CD4-positive, alpha-beta T cell (primary cell): ENCODE measurements at regions of chr10 and their contacts with region 1.

Region 1: GRCh38 chr10:29446327-29446726 is 157.5 kb downstream of the LYZL1 start:
- DNase-seq: no peak
- ATAC-seq: no peak
- H3K4me3 ChIP-seq: no peak overlapping the region
- H3K4me3 Mint-ChIP-seq: no peak overlapping the region
- H3K27ac ChIP-seq: no peak overlapping the region
- H3K27ac Mint-ChIP-seq: no peak overlapping the region
- H3K4me1 ChIP-seq: peaks cover 6% of the 10 kb centered on the region
- H3K4me1 Mint-ChIP-seq: peaks cover 9% of the 10 kb centered on the region
- H3K27me3 ChIP-seq: no peaks in the 10 kb centered on the region
- H3K27me3 Mint-ChIP-seq: no peaks in the 10 kb centered on the region
- CTCF ChIP-seq: no peak

Region 2: DNA sequence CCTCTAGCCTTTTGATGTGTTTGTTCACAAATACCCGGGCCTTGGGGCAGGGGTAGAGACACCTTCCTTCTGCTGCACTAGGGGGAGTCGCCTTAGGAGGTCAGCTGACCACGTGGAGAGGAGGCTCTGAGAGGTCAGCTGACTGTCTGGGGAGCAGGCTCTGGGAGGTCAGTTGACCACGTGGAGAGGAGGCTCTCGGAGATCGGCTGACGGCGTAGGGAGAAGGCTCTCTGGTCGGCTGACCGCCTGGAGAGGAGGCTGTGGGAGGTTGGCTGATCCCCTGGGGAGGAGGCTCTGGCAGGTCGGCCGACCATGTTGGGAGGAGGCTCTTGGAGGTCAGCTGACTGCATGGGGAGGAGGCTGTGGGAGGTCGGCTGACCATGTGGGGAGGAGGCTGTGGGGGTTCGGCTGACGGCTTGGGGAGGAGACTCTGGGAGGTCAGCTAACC is 217.0 kb before region 1 on chr10:
- CTCF ChIA-PET with region 1: no interaction called
- POLR2A ChIA-PET with region 1: no interaction called
- intact Hi-C with region 1: no loop called
- DNase-seq: no peak
- ATAC-seq: no peak
- H3K4me3 ChIP-seq: no peak overlapping the region
- H3K4me3 Mint-ChIP-seq: no peak overlapping the region
- H3K27ac ChIP-seq: no peak overlapping the region
- H3K27ac Mint-ChIP-seq: no peak overlapping the region
- H3K4me1 ChIP-seq: no peaks in the 10 kb centered on the region
- H3K4me1 Mint-ChIP-seq: no peaks in the 10 kb centered on the region
- H3K27me3 ChIP-seq: peaks cover 0 to 2% of the 10 kb centered on the region in 2 experiments
- H3K27me3 Mint-ChIP-seq: peaks cover 24% of the 10 kb centered on the region
- CTCF ChIP-seq: no peak

Region 3: GRCh38 chr10:29379208-29379607 is 67.1 kb before region 1 on chr10:
- CTCF ChIA-PET with region 1: no interaction called
- POLR2A ChIA-PET with region 1: no interaction called
- intact Hi-C with region 1: loop called in 1 of 2 experiments (anchors 2 kb)
- DNase-seq: no peak
- ATAC-seq: no peak
- H3K4me3 ChIP-seq: no peak overlapping the region
- H3K4me3 Mint-ChIP-seq: no peak overlapping the region
- H3K27ac ChIP-seq: no peak overlapping the region
- H3K27ac Mint-ChIP-seq: no peak overlapping the region
- H3K4me1 ChIP-seq: no peaks in the 10 kb centered on the region
- H3K4me1 Mint-ChIP-seq: peaks cover 6% of the 10 kb centered on the region
- H3K27me3 ChIP-seq: peaks cover 0 to 2% of the 10 kb centered on the region in 2 experiments
- H3K27me3 Mint-ChIP-seq: peaks cover 6% of the 10 kb centered on the region
- CTCF ChIP-seq: no peak

Region 4: GRCh38 chr10:29386342-29386999 is 59.9 kb before region 1 on chr10:
- CTCF ChIA-PET with region 1: no interaction called
- POLR2A ChIA-PET with region 1: no interaction called
- intact Hi-C with region 1: loop called (anchors 2 to 5 kb)
- DNase-seq: peak in 4 of 14 experiments; percentile 16 to 56 (median 48)
- ATAC-seq: peak; percentile 58
- H3K4me3 ChIP-seq: no peak overlapping the region
- H3K4me3 Mint-ChIP-seq: no peak overlapping the region
- H3K27ac ChIP-seq: no peak overlapping the region
- H3K27ac Mint-ChIP-seq: no peak overlapping the region
- H3K4me1 ChIP-seq: no peaks in the 10 kb centered on the region
- H3K4me1 Mint-ChIP-seq: peaks cover 3% of the 10 kb centered on the region
- H3K27me3 ChIP-seq: peaks cover 0 to 6% of the 10 kb centered on the region in 2 experiments
- H3K27me3 Mint-ChIP-seq: peaks cover 8% of the 10 kb centered on the region
- CTCF ChIP-seq: peak; percentile 89